ENCODE measurements at regions of chr9 and their contacts with region 1.

Region 1: GRCh38 chr9:20805766-20806165 is 121.7 kb downstream of the FOCAD start:
- DNase-seq: no peak
- ATAC-seq: no peak
- H3K4me3 ChIP-seq: no peak overlapping the region
- H3K27ac ChIP-seq: no peak overlapping the region
- H3K4me1 ChIP-seq: peaks cover 0 to 3% (median 0%) of the 10 kb centered on the region in 12 donors
- H3K27me3 ChIP-seq: no peaks in the 10 kb centered on the region
- CTCF ChIP-seq: no peak
- POLR2A ChIP-seq: no peak

Region 2: DNA sequence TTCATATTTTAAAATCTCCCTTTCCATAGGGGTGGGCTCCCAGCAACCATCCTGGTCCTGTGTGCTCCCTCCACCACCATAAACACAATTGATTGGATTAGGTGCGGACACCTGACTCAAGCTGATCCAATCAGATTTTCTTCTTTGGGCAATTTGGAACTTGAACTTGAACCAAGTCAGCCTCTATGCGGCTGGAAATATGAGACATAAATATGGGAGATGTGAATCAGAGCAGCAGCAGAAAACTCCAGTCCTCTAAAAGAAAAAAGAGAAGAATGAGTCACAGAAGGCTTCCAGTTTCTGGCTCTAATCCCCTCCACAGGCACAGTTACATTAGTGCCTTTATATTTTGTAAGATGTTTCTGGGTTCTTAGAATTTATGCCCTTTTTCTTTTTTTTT is 490.1 kb before region 1 on chr9:
- intact Hi-C with region 1: no loop called
- DNase-seq: no peak
- ATAC-seq: no peak
- H3K4me3 ChIP-seq: no peak overlapping the region
- H3K27ac ChIP-seq: no peak overlapping the region
- H3K4me1 ChIP-seq: peaks cover 0 to 12% (median 0%) of the 10 kb centered on the region in 12 donors
- H3K27me3 ChIP-seq: no peaks in the 10 kb centered on the region
- CTCF ChIP-seq: no peak
- POLR2A ChIP-seq: no peak

Region 3: GRCh38 chr9:20760246-20760901 is 45.4 kb before region 1 on chr9:
- intact Hi-C with region 1: loop called in 1 of 10 experiments (anchors 5 kb)
- DNase-seq: no peak
- ATAC-seq: no peak
- H3K4me3 ChIP-seq: no peak overlapping the region
- H3K27ac ChIP-seq: no peak overlapping the region
- H3K4me1 ChIP-seq: peaks cover 0 to 7% (median 0%) of the 10 kb centered on the region in 12 donors
- H3K27me3 ChIP-seq: no peaks in the 10 kb centered on the region
- CTCF ChIP-seq: no peak
- POLR2A ChIP-seq: no peak

Region 4: GRCh38 chr9:20854444-20854843 is 48.7 kb after region 1 on chr9:
- intact Hi-C with region 1: no loop called
- DNase-seq: no peak
- ATAC-seq: no peak
- H3K4me3 ChIP-seq: no peak overlapping the region
- H3K27ac ChIP-seq: no peak overlapping the region
- H3K4me1 ChIP-seq: peaks cover 0 to 6% (median 0%) of the 10 kb centered on the region in 12 donors
- H3K27me3 ChIP-seq: no peaks in the 10 kb centered on the region
- CTCF ChIP-seq: no peak
- POLR2A ChIP-seq: no peak